Prostate gland (tissue), 2 donors: ENCODE measurements at regions of chr15 and their contacts with region 1.

Region 1: DNA sequence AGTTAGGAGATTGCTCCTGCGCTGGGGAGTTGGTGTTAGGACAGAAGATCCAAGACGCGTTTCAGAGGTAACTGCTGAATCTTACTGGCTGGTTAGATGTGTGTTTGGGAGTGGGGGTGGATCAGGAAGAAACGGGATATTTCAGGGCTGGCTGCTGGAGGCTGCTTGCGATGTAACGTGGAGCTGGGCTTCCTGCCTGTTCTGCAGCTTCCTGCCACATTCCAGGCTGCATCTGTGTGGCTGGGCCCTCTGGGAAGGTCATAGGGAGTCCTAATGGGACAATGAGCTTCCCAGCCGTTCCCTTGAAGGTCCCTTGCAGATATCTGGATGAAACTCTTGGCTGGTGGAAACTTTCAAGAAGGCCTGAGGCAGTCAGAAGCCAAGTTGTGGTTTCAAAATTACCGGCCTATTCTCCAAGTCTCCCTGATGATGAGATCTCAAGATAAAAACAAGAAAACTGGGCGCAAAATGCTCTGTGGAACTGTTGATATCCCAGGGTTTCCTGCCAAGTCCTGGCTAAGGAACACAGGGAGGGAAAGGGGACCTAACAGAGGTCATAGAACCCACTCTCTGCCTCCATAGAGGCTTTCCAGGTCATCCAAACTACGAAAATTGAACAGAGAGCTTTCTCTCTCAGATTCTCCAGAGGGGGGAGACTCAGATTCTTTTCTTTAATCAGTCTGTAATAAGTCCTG is 67.0 kb downstream of the NOX5 start:
- DNase-seq: no peak
- H3K4me3 ChIP-seq: no peak overlapping the region
- H3K27ac ChIP-seq: no peak overlapping the region
- H3K4me1 ChIP-seq: no peaks in the 10 kb centered on the region
- H3K27me3 ChIP-seq: no peaks in the 10 kb centered on the region
- CTCF ChIP-seq: no peak
- POLR2A ChIP-seq: no peak

Region 2: GRCh38 chr15:69126054-69126469 is 44.6 kb after region 1 on chr15:
- intact Hi-C with region 1: loop called (anchors 5 kb)
- DNase-seq: no peak
- H3K4me3 ChIP-seq: no peak overlapping the region
- H3K27ac ChIP-seq: no peak overlapping the region
- H3K4me1 ChIP-seq: no peaks in the 10 kb centered on the region
- H3K27me3 ChIP-seq: no peaks in the 10 kb centered on the region
- CTCF ChIP-seq: no peak
- POLR2A ChIP-seq: no peak